Activated CD4-positive, alpha-beta memory T cell treated with anti-CD3 and anti-CD28 coated beads for 36 hours (primary cell): ENCODE measurements at regions of chr10 and their contacts with region 1.

Region 1: DNA sequence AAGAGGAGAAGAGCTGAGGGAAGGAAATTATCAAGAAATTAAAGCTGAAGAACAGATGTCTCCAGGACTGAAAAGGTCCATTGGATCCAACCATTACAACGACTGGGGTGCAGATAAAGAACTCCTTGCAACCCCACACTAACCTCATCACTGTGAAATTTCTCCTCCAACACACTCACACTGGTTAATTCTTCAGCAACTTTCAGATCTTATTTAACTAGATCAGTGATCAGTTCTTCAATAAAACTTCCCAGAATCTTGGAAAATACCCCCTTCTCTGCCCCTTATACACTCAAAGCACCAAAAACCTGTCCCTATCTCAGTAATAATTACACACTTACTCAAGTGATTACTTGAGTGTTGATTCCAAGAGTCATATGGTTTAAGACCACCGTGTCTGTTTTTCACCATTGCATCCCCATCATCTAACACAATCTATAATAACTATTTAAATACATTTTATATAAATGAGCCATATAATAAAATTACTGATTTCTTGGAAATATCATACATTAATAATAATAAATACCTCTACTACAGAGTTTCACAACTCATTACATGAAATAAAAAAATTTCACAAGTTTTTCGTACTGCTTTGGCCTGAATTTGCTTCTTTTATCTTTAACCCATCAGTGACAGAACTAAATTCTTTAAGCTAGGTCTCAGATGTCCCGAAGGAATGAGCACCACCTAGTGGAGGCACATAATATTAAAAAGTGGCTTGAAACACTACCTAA is 123.7 kb downstream of the MPP7 start:
- DNase-seq: peak; percentile 22
- H3K4me3 Mint-ChIP-seq: no peak overlapping the region
- H3K27ac Mint-ChIP-seq: peak overlapping the region; percentile 72
- H3K4me1 Mint-ChIP-seq: peaks cover 37% of the 10 kb centered on the region
- H3K27me3 Mint-ChIP-seq: no peaks in the 10 kb centered on the region

Region 2: GRCh38 chr10:27446091-27446918 is 732.9 kb before region 1 on chr10:
- CTCF ChIA-PET with region 1: interaction called, 5 read pairs
- POLR2A ChIA-PET with region 1: no interaction called
- intact Hi-C with region 1: loop called (anchors 5 kb)
- DNase-seq: no peak
- H3K4me3 Mint-ChIP-seq: no peak overlapping the region
- H3K27ac Mint-ChIP-seq: no peak overlapping the region
- H3K4me1 Mint-ChIP-seq: peaks cover 9% of the 10 kb centered on the region
- H3K27me3 Mint-ChIP-seq: no peaks in the 10 kb centered on the region

Region 3: GRCh38 chr10:27742195-27743011 is 436.8 kb before region 1 on chr10:
- CTCF ChIA-PET with region 1: interaction called, 25 read pairs
- POLR2A ChIA-PET with region 1: interaction called, 5 read pairs
- intact Hi-C with region 1: loop called (anchors 1 kb)
- DNase-seq: peak; percentile 91
- H3K4me3 Mint-ChIP-seq: peak overlapping the region; percentile 74
- H3K27ac Mint-ChIP-seq: no peak overlapping the region
- H3K4me1 Mint-ChIP-seq: peaks cover 39% of the 10 kb centered on the region
- H3K27me3 Mint-ChIP-seq: peaks cover 49% of the 10 kb centered on the region

Region 4: GRCh38 chr10:27959093-27959715 is 220.0 kb before region 1 on chr10:
- CTCF ChIA-PET with region 1: no interaction called
- POLR2A ChIA-PET with region 1: no interaction called
- intact Hi-C with region 1: loop called (anchors 5 kb)
- DNase-seq: no peak
- H3K4me3 Mint-ChIP-seq: no peak overlapping the region
- H3K27ac Mint-ChIP-seq: no peak overlapping the region
- H3K4me1 Mint-ChIP-seq: peaks cover 11% of the 10 kb centered on the region
- H3K27me3 Mint-ChIP-seq: no peaks in the 10 kb centered on the region

Region 5: GRCh38 chr10:28217848-28218247 is 38.7 kb after region 1 on chr10:
- CTCF ChIA-PET with region 1: interaction called, 5 read pairs
- POLR2A ChIA-PET with region 1: no interaction called
- intact Hi-C with region 1: loop called (anchors 2 kb)
- DNase-seq: peak; percentile 27
- H3K4me3 Mint-ChIP-seq: no peak overlapping the region
- H3K27ac Mint-ChIP-seq: no peak overlapping the region
- H3K4me1 Mint-ChIP-seq: peaks cover 25% of the 10 kb centered on the region
- H3K27me3 Mint-ChIP-seq: no peaks in the 10 kb centered on the region

Region 6: DNA sequence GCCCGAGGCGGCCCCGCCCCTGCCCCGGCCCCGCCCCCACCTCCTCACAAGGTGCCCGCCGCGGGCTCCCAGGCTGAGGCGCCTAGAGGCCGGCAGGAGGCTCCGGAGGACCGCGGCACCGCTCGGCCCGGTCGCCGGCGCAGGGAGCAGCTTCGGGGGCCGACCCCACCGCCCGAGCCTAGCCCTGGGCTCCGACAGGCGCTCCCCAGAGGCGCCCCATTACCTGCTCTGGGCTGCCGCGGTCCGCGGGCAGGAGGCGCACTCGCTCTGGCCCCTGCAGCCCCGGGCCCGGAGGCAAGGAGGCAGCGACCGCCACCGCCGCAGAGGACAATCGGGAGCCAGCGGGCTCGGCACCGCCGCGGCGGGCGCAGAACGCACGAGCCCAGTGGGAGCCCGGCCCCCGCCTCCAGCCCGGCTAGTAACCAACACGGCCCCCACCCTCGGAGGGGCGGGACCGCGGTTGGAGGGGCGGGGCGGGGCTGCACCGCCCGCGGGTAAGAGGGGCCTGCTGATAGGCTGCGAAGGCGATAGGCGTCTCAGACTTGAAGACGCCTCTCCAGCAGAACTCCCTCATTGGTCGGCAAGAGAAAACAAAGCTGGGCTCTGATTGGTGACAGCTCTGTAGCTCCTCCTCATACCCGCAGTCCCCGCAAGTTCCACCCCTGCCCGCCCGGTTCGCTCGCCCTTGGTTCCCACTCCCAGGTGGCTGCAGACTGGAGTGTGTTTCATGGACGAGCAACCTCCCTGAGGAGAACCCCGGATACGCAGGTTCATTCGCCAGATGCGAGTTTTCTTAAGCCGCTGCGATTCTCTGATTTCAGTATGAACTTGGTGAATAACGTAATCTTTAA is 123.7 kb after region 1 on chr10 and contains the start of gene MPP7:
- CTCF ChIA-PET with region 1: no interaction called
- POLR2A ChIA-PET with region 1: no interaction called
- intact Hi-C with region 1: loop called (anchors 2 kb)
- DNase-seq: peak; percentile 97
- H3K4me3 Mint-ChIP-seq: peak within 1 kb of the TSS; percentile 90
- H3K27ac Mint-ChIP-seq: peak within 1 kb of the TSS; percentile 71
- H3K4me1 Mint-ChIP-seq: peaks cover 46% of the 10 kb centered on the region
- H3K27me3 Mint-ChIP-seq: no peaks in the 10 kb centered on the region
- total RNA-seq, gene MPP7: 11.6 to 12.8 TPM

Region 7: DNA sequence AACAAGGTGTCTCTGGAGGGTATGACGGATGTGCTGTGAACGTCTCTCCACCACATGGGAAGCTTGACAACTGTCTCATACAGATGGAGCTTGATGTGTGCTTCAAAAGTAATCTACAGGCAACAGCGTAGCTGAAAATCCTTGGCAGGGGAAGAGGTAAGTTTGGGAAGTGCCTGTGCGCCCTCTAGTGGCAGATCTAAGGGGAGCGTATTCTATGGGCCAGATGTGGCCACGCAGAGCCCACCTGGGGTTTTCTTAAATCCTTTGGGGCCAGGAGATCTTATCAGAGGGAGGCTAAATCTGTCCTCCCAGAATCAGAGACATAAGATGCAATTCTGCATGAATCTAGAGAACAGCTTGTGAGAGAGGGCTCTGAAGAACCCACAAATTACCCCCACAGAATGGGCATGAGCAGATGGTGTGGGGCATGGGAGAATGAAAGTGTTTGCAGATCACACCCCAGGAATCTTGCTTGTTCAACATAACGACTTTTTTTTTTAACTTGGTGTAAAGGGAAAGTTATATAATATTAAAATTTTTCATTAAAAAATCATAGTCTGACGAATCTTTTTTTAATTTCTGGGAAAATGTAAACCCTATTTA is 214.9 kb after region 1 on chr10:
- CTCF ChIA-PET with region 1: interaction called, 10 read pairs
- POLR2A ChIA-PET with region 1: no interaction called
- intact Hi-C with region 1: no loop called
- DNase-seq: peak; percentile 76
- H3K4me3 Mint-ChIP-seq: no peak overlapping the region
- H3K27ac Mint-ChIP-seq: no peak overlapping the region
- H3K4me1 Mint-ChIP-seq: peaks cover 3% of the 10 kb centered on the region
- H3K27me3 Mint-ChIP-seq: no peaks in the 10 kb centered on the region